AG04449 (cell line): ENCODE measurements at regions of chr4 and their contacts with region 1.

Region 1: DNA sequence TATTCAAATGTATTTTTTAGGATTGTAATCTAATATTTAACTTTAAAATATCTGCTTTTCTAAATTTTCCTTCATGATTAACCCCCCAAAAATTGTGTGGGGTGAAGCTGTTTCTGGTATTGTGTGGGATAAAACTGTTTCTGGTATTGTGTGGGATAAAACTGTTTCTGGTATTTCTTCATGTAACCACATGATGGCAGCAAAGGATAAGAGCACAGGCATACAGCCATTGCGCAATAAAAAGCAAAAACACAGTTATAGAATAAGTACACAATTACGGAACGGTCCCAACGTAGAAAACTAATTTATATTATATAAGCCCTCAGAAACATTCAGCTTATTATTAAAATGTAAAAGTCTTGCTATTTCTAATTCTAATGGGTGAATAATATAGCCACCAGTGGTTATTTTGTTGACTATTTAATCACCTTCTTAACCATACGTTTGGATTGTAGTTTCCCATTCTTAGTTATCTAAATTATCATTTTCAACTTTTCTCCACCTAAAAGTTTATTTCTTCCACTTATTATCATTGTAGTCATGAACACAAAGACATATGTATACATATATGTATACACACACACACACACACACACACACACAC is 333.9 kb upstream of the FSTL5 start:
- DNase-seq: no peak
- H3K4me3 ChIP-seq: no peak overlapping the region
- CTCF ChIP-seq: peak; percentile 56

Region 2: DNA sequence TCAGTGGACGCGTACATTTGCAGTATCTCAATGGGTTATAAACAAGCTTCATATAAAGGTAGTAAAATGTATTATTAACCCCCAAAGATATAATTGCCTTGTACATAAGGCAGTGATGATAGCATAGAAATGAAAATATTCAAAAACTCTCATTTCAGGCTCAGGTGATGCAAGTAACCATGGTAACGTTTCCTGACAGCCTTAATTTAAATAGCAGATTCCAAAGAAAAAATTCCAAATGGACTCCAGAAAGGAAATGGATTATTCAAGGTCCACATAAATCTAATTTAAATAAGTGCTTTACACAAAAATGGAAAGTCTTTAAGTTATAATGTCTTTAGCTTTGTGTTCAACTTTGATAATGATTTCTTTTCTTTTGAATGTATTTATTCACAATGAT is 15.1 kb after region 1 on chr4:
- CTCF ChIA-PET with region 1: interaction called, 12 read pairs
- POLR2A ChIA-PET with region 1: no interaction called
- DNase-seq: no peak
- H3K4me3 ChIP-seq: no peak overlapping the region
- CTCF ChIP-seq: no peak

Region 3: GRCh38 chr4:162565730-162566129 is 68.1 kb after region 1 on chr4:
- CTCF ChIA-PET with region 1: no interaction called
- POLR2A ChIA-PET with region 1: no interaction called
- DNase-seq: no peak
- H3K4me3 ChIP-seq: no peak overlapping the region
- CTCF ChIP-seq: no peak

Region 4: GRCh38 chr4:163042306-163042705 is 544.6 kb after region 1 on chr4:
- CTCF ChIA-PET with region 1: interaction called, 45 read pairs
- POLR2A ChIA-PET with region 1: no interaction called
- DNase-seq: no peak
- H3K4me3 ChIP-seq: no peak overlapping the region
- CTCF ChIP-seq: no peak

Region 5: DNA sequence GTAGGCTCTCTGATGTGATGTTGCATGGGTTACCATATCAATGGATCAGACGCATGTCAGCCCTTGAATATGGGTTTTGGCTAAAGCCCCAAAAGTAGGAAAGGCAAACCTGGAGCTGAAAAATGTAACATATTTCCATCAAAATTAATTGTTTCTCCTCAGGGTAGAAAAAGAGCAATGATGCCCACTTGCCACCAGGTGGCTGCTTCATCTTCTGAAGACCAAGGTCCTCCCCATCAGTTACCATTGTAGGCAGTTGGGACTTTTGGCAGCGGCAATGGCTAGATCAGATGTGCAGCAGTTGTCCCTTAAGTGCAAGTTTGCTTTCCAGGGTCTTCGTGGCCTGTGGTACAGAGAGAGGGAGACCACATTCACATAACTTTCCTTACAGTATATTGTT is 550.8 kb after region 1 on chr4:
- CTCF ChIA-PET with region 1: interaction called, 20 read pairs
- POLR2A ChIA-PET with region 1: no interaction called
- DNase-seq: no peak
- H3K4me3 ChIP-seq: no peak overlapping the region
- CTCF ChIP-seq: peak; percentile 43